ENCODE measurements at regions of chr11 and their contacts with region 1.

Region 1: DNA sequence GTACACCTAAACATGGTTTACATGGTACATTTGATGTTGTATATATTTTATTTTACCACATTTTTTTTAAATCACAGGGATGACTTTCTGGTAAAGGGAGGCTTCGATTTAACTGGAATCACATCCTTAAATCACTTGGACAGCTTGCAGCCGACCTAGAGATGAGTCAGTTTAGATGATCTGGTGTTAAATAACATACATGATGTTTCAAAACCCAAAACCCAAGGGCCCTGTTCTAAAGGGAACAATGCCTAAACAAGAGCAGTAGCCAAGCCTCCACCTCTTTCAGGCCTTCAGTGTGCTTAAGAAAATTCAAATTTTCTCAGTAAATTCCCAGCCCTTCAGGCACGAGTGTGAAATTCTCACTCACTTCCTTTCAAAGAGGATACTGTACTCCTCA is 108.8 kb downstream of the WT1 start:
- DNase-seq: no peak
- H3K4me3 ChIP-seq: no peak overlapping the region
- H3K27ac ChIP-seq: no peak overlapping the region
- H3K4me1 ChIP-seq: no peaks in the 10 kb centered on the region
- H3K27me3 ChIP-seq: no peaks in the 10 kb centered on the region
- CTCF ChIP-seq: no peak

Region 2: GRCh38 chr11:30960387-30960992 is 1366.0 kb before region 1 on chr11:
- CTCF ChIA-PET with region 1: interaction called, 15 read pairs
- dilution Hi-C with region 1: no loop called
- in situ Hi-C with region 1: no loop called
- intact Hi-C with region 1: no loop called
- DNase-seq: no peak
- H3K4me3 ChIP-seq: no peak overlapping the region
- H3K27ac ChIP-seq: no peak overlapping the region
- H3K4me1 ChIP-seq: no peaks in the 10 kb centered on the region
- H3K27me3 ChIP-seq: no peaks in the 10 kb centered on the region
- CTCF ChIP-seq: peak; percentile 48 to 64

Region 3: DNA sequence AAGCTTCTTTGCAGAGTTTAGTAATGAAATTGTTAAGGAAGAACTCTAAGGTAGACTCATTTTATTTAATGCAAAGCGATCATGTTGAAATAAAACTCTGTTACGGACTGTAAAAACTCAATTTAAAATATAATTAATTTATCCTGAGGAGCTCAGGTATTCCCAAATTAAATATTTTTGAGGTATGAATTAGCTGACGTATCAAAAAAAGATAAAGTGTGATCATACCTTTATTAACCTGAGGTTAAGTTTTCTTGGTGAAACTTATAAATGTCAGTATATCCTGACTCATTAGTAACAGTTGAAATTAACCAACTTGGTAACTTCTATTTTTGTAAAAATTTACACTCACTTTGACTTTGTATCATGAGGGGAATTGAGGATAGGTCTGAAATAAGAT is 645.8 kb before region 1 on chr11:
- CTCF ChIA-PET with region 1: interaction called, 10 read pairs
- dilution Hi-C with region 1: no loop called
- in situ Hi-C with region 1: no loop called
- intact Hi-C with region 1: no loop called
- DNase-seq: no peak
- H3K4me3 ChIP-seq: no peak overlapping the region
- H3K27ac ChIP-seq: no peak overlapping the region
- H3K4me1 ChIP-seq: no peaks in the 10 kb centered on the region
- H3K27me3 ChIP-seq: no peaks in the 10 kb centered on the region
- CTCF ChIP-seq: no peak

Region 4: DNA sequence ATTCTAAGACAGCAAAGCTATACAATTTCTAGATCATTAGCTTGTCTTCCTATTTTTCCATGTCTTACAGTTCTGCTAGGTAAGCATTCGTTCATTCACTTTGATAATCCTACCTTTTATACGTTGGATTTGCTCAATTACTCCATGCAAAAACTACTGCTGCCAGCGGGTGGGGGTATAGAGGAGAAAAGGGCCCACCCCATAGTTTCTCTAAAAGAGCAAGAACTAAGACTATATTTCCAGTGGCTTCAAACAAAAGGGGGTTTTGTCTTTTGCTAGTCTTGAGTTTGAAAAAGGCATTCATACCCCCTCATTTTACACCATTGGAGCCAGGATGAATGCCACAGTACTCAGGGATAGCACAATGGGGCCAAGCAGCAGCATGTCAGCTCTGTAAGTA is 46.9 kb before region 1 on chr11:
- CTCF ChIA-PET with region 1: no interaction called
- dilution Hi-C with region 1: no loop called
- in situ Hi-C with region 1: no loop called
- intact Hi-C with region 1: no loop called
- DNase-seq: no peak
- H3K4me3 ChIP-seq: no peak overlapping the region
- H3K27ac ChIP-seq: no peak overlapping the region
- H3K4me1 ChIP-seq: no peaks in the 10 kb centered on the region
- H3K27me3 ChIP-seq: peaks cover 1% of the 10 kb centered on the region
- CTCF ChIP-seq: peak in 1 of 2 donors; percentile 19

Region 5: GRCh38 chr11:32583459-32584271 is 257.1 kb after region 1 on chr11 and contains the start of gene EIF3M:
- CTCF ChIA-PET with region 1: no interaction called
- dilution Hi-C with region 1: no loop called
- in situ Hi-C with region 1: no loop called
- intact Hi-C with region 1: loop called (anchors 1 kb)
- DNase-seq: peak; percentile 94
- H3K4me3 ChIP-seq: peak within 1 kb of the TSS; percentile 92 to 99 (median 93)
- H3K27ac ChIP-seq: peak within 1 kb of the TSS; percentile 86
- H3K4me1 ChIP-seq: peaks cover 18% of the 10 kb centered on the region
- H3K27me3 ChIP-seq: no peaks in the 10 kb centered on the region
- CTCF ChIP-seq: no peak
- total RNA-seq, gene EIF3M: 305 to 469 TPM

Region 6: DNA sequence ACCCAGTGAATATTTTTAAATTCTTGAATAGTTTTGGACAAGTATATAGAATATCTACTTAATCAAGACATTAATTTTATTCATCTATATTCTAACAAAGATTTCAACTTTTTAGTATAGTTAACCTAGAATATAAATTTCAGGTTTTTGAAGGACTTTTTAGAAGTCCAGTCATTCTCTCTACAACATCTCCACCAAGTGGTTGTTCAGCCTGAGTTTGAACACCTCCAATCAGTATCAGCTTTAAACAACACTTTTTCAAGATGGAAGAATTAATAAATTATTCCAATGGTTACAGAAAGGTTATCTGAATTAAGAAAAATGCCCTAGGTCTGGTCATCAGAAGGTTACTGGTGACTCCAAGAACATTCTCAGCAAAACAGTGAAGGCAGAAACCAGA is 288.9 kb after region 1 on chr11:
- CTCF ChIA-PET with region 1: no interaction called
- dilution Hi-C with region 1: no loop called
- in situ Hi-C with region 1: no loop called
- intact Hi-C with region 1: loop called (anchors 10 kb)
- DNase-seq: no peak
- H3K4me3 ChIP-seq: no peak overlapping the region
- H3K27ac ChIP-seq: no peak overlapping the region
- H3K4me1 ChIP-seq: no peaks in the 10 kb centered on the region
- H3K27me3 ChIP-seq: no peaks in the 10 kb centered on the region
- CTCF ChIP-seq: peak; percentile 10 to 26